ENCODE measurements at regions of chr22 and their contacts with region 1.

Region 1: DNA sequence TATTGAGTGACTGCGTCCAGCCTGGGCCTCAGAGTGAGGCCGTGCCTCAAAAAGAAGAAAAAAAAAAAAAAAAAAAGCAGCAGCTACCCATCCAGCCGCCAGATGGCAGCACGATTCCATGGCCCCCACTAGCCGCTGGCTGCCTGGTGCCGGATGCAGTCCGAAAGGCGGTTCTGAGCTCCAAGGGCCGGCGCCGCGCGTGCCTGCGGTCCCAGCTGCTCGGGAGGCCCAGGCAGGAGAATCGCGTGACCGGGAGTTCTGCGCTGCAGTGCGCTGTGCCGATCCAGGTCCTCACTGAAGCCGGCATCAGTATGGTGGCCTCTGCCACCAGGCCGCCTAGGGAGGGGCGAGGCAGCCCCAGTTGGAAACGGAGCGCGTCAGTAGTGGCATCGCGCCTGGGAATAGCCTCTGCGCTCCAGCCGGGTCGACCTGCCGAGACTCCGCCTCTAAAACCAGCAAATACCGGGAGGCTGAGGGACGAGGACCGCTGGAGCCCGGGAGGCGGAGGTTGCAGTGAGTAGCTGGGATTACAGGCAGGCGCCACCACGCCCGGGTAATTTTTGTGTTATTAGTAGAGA is 19.3 kb downstream of the SCARF2 start:
- DNase-seq: peak; percentile 89
- ATAC-seq: peak; percentile 88 to 91

Region 2: GRCh38 chr22:20324139-20324516 is 94.2 kb before region 1 on chr22:
- intact Hi-C with region 1: no loop called
- DNase-seq: no peak
- ATAC-seq: no peak

Region 3: GRCh38 chr22:20456064-20456721 is 37.9 kb after region 1 on chr22:
- intact Hi-C with region 1: loop called (anchors 2 to 5 kb)
- DNase-seq: peak; percentile 77
- ATAC-seq: peak; percentile 88 to 89

Region 4: DNA sequence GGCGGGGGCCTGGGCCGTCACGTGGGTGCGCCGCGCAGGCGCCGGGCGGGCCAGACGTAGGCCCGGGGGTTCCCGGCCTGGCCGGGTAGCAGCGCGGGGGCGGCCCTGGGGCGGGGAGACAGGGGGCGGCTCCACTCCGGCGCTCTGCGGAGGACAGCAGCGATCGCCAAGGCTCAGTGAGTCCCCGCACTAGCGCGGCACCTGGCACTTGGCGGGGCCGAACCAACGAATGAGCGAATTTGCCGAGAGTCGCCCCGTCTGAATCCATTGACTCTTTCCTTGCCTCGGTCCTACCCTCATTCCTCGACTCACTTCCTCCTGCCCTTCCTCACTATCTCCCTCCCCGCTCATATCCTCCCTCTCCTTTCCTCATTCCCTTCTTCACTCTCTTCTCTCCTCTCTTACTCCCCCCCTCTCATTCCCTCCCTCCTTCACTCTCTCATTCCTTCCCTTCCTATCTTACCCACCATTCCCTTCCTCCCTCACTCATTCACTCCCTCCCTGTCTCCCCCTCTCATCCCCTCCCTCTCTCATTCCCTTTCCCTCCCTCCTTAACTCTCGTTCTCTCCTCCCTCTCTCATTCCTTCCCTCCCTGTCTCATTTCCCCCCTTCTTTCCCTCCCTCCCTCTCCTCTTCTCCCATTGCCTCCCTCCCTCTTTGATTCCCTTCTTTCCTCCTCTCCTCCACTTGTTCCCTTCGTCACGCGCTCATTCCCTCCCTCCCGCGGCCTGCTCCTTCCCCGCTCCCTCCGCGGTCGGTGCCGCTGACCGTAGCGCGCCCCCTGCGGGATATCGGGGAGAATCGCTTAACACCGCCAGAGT is 77.8 kb after region 1 on chr22:
- intact Hi-C with region 1: loop called in 1 of 2 experiments (anchors 5 kb)
- DNase-seq: peak; percentile 94
- ATAC-seq: peak; percentile 97

Region 5: DNA sequence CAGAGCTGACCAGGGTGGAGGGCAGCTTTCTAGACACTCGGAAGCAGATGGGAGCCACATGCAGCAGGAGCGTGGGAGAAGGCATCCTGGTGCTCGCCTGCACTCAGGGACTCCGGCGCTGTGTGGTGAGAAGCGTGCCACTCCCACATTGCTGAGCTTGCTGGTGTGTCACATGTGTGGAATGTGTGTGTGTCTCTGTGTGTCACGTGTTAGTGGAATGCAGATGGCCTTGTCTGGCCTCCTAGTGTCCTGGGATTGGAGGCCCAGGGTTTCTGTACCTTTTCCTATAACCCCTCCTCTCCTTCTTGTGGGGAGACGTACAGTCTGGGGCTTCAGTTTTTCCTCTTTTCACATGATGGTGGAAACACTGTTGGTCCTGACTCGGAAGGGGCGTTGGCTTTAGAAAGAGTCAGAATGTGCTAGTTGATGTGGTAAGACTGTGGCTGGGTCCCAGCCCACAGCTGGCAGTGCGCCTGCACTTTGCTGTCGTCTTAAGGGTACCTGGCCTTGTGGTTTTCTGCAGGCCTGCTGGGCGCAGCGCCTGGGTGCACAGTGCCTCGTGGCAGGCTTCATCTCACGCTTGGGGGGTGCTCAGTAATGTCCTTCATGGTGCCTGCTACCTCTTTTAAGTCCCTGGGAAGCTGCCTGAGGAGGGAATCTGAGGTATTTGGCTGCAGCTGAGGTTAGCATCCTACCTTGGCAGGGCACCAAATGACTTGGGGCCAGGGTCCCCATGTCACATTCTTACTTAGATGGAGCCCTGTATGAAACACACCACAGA is 150.9 kb after region 1 on chr22:
- intact Hi-C with region 1: loop called in 1 of 2 experiments (anchors 10 kb)
- DNase-seq: peak; percentile 63
- ATAC-seq: peak; percentile 74 to 83

Region 6: DNA sequence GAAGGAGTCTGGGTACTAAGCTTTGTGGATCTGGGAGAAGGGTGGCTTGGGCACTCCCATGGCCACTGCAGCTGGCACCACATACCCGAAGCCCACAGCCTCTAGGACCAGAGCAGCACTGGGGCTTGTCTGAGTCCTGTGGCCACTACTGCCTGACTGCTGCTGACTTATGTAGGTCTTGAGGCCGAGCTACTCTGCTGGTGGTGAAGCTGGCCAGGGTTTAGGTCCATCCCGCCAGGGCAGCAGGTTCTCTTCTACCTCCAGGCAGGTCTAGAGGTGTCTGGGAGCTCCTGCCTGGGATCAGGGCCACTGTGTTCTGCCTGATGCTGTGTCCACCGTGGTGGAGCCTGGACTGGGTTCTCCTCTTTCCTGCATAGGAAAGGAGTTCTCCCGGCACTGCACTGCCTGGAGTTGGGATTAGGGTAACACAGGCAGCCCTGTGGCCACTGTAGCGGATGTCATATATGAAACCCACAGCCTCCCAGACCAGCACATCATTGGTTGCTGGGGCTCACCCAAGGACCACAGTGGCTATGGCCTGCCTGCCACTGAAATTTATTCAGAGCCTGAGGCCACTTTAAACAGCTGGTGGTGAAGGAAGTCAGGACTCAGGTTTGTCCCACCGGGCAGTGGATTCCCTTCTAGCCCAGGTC is 245.8 kb after region 1 on chr22:
- intact Hi-C with region 1: no loop called
- DNase-seq: no peak
- ATAC-seq: no peak